Activated naive CD4-positive, alpha-beta T cell treated with anti-CD3 and anti-CD28 coated beads for 36 hours (primary cell): ENCODE measurements at regions of chr16 and their contacts with region 1.

Region 1: GRCh38 chr16:58733671-58734458 is at the start of gene GOT2:
- DNase-seq: peak; percentile 83
- H3K4me3 Mint-ChIP-seq: peak within 1 kb of the TSS; percentile 95
- H3K27ac Mint-ChIP-seq: peak within 1 kb of the TSS; percentile 84
- H3K4me1 Mint-ChIP-seq: peaks cover 42% of the 10 kb centered on the region
- H3K27me3 Mint-ChIP-seq: no peaks in the 10 kb centered on the region
- total RNA-seq, gene GOT2: 156 to 162 TPM

Region 2: GRCh38 chr16:58025351-58026138 is 708.3 kb before region 1 on chr16 and contains the start of gene MMP15:
- CTCF ChIA-PET with region 1: no interaction called
- intact Hi-C with region 1: loop called (anchors 10 kb)
- DNase-seq: peak; percentile 60
- H3K4me3 Mint-ChIP-seq: peak within 1 kb of the TSS; percentile 79
- H3K27ac Mint-ChIP-seq: no peak within 1 kb of the TSS
- H3K4me1 Mint-ChIP-seq: peaks cover 10% of the 10 kb centered on the region
- H3K27me3 Mint-ChIP-seq: no peaks in the 10 kb centered on the region
- total RNA-seq, gene MMP15: 0.12 to 0.24 TPM

Region 3: DNA sequence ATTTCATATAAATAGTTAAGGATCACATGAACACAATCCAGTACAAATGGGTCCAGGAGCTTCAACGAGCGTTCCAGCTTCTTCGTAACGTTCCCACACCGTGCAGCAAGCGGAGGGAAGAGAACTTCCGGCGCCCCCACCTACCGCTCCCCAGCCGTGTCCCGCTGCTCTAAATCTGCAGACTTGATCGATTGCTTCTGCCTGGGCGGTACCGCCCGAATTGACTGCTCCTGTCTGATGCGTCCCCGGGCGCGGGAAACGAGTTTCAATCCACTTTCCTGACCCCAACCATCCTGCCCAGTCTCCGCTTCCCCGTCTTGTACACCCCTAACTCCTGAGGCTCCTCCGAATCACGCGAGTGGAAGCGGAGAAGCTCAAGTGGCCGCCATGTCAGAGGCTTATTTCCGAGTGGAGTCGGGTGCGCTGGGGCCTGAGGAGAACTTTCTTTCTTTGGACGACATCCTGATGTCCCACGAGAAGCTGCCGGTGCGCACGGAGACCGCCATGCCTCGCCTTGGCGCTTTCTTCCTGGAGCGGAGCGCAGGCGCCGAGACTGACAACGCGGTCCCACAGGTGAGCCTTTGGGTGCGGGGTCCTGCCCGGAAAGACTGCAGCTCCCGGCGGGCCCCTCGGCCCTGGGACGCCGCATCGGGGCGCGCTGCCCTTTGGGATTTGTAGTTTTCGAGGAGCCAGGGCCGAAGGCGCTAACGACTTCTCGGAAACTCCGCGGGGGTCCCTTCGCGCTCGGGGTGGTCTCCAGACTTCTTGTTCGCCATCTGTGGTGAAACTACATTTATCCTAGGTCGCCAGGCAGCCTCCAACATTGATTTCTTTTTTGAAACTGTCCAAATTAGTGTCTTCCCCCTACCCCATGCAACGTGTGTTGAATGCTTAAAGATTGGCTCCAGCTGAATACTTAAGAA is 341.4 kb before region 1 on chr16 and contains the start of gene GINS3:
- CTCF ChIA-PET with region 1: no interaction called
- intact Hi-C with region 1: loop called (anchors 2 kb)
- DNase-seq: peak; percentile 94
- H3K4me3 Mint-ChIP-seq: peak within 1 kb of the TSS; percentile 98
- H3K27ac Mint-ChIP-seq: peak within 1 kb of the TSS; percentile 99
- H3K4me1 Mint-ChIP-seq: peaks cover 16% of the 10 kb centered on the region
- H3K27me3 Mint-ChIP-seq: no peaks in the 10 kb centered on the region
- total RNA-seq, gene GINS3: 19.2 to 20.3 TPM

Region 4: GRCh38 chr16:58515125-58515870 is 218.6 kb before region 1 on chr16 and contains the start of gene SETD6:
- CTCF ChIA-PET with region 1: no interaction called
- intact Hi-C with region 1: loop called (anchors 1 kb)
- DNase-seq: peak; percentile 78
- H3K4me3 Mint-ChIP-seq: peak within 1 kb of the TSS; percentile 88
- H3K27ac Mint-ChIP-seq: peak within 1 kb of the TSS; percentile 74
- H3K4me1 Mint-ChIP-seq: peaks cover 45% of the 10 kb centered on the region
- H3K27me3 Mint-ChIP-seq: no peaks in the 10 kb centered on the region
- total RNA-seq, gene SETD6: 8.1 to 8.5 TPM

Region 5: GRCh38 chr16:58684354-58685083 is 49.3 kb before region 1 on chr16 and contains the start of gene SLC38A7:
- CTCF ChIA-PET with region 1: interaction called, 3 read pairs
- intact Hi-C with region 1: loop called (anchors 1 kb)
- DNase-seq: peak; percentile 78
- H3K4me3 Mint-ChIP-seq: peak within 1 kb of the TSS; percentile 89
- H3K27ac Mint-ChIP-seq: peak within 1 kb of the TSS; percentile 8
- H3K4me1 Mint-ChIP-seq: peaks cover 15% of the 10 kb centered on the region
- H3K27me3 Mint-ChIP-seq: no peaks in the 10 kb centered on the region
- total RNA-seq, gene SLC38A7: 4.3 to 4.6 TPM